ENCODE measurements at regions of chr12 and their contacts with region 1.

Region 1: GRCh38 chr12:85804663-85805062 is 31.5 kb downstream of the RASSF9 start:
- DNase-seq: no peak
- H3K4me3 ChIP-seq: no peak overlapping the region
- H3K27ac ChIP-seq: no peak overlapping the region
- H3K4me1 ChIP-seq: peaks cover 0 to 18% (median 7%) of the 10 kb centered on the region in 4 experiments
- H3K27me3 ChIP-seq: no peaks in the 10 kb centered on the region

Region 2: DNA sequence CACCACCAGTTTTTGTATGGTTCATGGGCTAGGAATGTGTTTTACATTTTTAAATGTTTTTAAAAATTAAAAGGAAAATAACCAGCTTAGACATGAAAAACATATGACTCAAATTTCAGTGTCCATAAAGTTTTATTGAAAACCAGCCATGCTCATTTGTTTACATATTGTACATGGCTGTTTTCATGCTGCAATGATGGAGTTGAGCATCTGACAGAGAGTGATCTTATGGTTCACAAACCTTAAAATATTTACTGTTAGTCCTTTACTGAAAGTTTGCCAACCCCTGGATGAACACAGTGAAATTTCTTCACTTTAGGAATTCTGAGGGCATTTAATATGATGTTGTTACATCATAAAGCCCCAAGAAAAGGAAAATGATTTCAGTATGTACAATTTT is 15.4 kb after region 1 on chr12:
- CTCF ChIA-PET with region 1: interaction called, 11 read pairs
- POLR2A ChIA-PET with region 1: no interaction called
- DNase-seq: no peak
- H3K4me3 ChIP-seq: no peak overlapping the region
- H3K27ac ChIP-seq: peak overlapping the region in 1 of 2 experiments; percentile 66
- H3K4me1 ChIP-seq: peaks cover 0 to 11% (median 2%) of the 10 kb centered on the region in 4 experiments
- H3K27me3 ChIP-seq: no peaks in the 10 kb centered on the region

Region 3: GRCh38 chr12:85877459-85877858 is 72.8 kb after region 1 on chr12:
- CTCF ChIA-PET with region 1: no interaction called
- POLR2A ChIA-PET with region 1: no interaction called
- DNase-seq: no peak
- H3K4me3 ChIP-seq: no peak overlapping the region
- H3K27ac ChIP-seq: no peak overlapping the region
- H3K4me1 ChIP-seq: peaks cover 0 to 2% (median 1%) of the 10 kb centered on the region in 4 experiments
- H3K27me3 ChIP-seq: no peaks in the 10 kb centered on the region

Measured in common myeloid progenitor, CD34-positive (primary cell).